Adrenal gland (tissue), 19 donors: ENCODE measurements at regions of chr18 and their contacts with region 1.

Region 1: DNA sequence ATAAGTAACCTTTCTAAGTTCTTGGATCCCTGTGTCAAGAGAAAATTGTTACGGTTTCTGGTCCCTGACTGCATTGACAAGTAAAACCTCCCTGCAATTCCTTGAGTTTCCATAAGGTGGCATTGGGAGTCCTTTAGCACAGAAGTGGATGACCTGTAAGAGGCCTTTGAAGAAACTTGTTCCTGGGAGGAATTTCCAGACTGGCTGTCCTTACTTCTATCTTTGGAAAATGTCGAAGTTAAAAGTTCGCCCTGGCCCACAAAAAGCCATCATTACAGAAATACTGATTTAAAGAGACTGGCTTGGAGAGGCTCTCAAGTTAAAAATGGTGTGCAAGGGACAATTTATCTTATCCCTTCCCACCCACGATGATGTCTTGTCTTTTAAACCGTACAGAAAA is 218.4 kb downstream of the CDH20 start:
- DNase-seq: peak; percentile 34 to 70 (median 60)
- H3K4me3 ChIP-seq: no peak overlapping the region
- H3K27ac ChIP-seq: no peak overlapping the region
- H3K4me1 ChIP-seq: peaks cover 0 to 4% of the 10 kb centered on the region in 2 donors
- H3K27me3 ChIP-seq: no peaks in the 10 kb centered on the region
- CTCF ChIP-seq: peak; percentile 69 to 88 (median 82)
- POLR2A ChIP-seq: no peak

Region 2: GRCh38 chr18:62131301-62131909 is 579.8 kb after region 1 on chr18:
- intact Hi-C with region 1: loop called in 1 of 2 experiments (anchors 10 kb)
- DNase-seq: peak; percentile 48 to 74 (median 54)
- H3K4me3 ChIP-seq: no peak overlapping the region
- H3K27ac ChIP-seq: no peak overlapping the region
- H3K4me1 ChIP-seq: no peaks in the 10 kb centered on the region
- H3K27me3 ChIP-seq: no peaks in the 10 kb centered on the region
- CTCF ChIP-seq: peak; percentile 72 to 98 (median 92)
- POLR2A ChIP-seq: no peak